ENCODE measurements at regions of chr17 and their contacts with region 1.

Region 1: GRCh38 chr17:63600569-63601438 is at the start of gene TACO1:
- DNase-seq: peak; percentile 81
- H3K4me3 Mint-ChIP-seq: peak within 1 kb of the TSS; percentile 97
- H3K27ac Mint-ChIP-seq: peak within 1 kb of the TSS; percentile 92
- H3K4me1 Mint-ChIP-seq: peaks cover 51% of the 10 kb centered on the region
- H3K27me3 Mint-ChIP-seq: no peaks in the 10 kb centered on the region
- total RNA-seq, gene TACO1: 26.7 to 27.9 TPM

Region 2: GRCh38 chr17:63445979-63446691 is 154.7 kb before region 1 on chr17 and contains the start of gene CYB561:
- CTCF ChIA-PET with region 1: no interaction called
- POLR2A ChIA-PET with region 1: interaction called, 11 read pairs
- DNase-seq: peak; percentile 74
- H3K4me3 Mint-ChIP-seq: peak within 1 kb of the TSS; percentile 64
- H3K27ac Mint-ChIP-seq: peak within 1 kb of the TSS; percentile 69
- H3K4me1 Mint-ChIP-seq: peaks cover 46% of the 10 kb centered on the region
- H3K27me3 Mint-ChIP-seq: peaks cover 3% of the 10 kb centered on the region
- total RNA-seq, gene CYB561: 28.9 to 30.3 TPM

Region 3: DNA sequence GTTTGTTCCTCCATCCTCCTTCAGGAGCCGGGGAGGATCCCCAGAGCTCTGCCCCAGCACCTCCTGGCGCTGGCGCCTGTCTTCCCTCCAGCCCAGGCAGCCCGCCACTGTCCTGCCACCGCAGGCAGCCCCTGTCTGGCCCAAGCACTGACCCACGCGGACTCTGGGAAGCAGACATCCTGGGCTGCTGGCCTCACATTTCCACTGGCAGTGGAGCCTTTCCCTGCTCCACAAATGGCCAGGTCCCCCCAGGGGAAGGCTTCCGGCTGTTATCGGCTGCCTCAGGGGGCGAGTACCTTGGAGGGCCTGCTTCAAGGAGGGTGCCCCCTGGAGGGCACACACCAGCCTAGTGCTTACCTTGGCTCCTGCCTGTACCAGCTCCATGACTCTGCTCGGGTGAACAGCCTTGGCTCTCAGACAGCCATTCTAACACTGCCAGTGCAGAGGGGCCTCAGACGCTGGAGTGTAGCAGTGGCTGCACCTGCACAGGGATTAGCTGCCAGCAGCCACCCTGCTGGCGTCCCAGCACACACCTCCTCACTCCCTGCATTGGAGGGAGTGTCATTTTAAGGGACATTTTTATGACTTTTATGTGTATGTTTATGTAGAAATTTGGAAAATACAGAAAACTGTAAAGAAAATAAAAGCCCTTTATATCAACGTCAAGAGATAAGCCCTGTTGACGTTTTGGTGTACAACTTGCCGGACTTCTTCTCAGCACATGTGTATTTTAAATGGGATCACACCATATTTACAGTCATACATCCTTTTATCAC is 102.9 kb before region 1 on chr17:
- CTCF ChIA-PET with region 1: no interaction called
- POLR2A ChIA-PET with region 1: no interaction called
- DNase-seq: no peak
- H3K4me3 Mint-ChIP-seq: no peak overlapping the region
- H3K27ac Mint-ChIP-seq: no peak overlapping the region
- H3K4me1 Mint-ChIP-seq: no peaks in the 10 kb centered on the region
- H3K27me3 Mint-ChIP-seq: peaks cover 7% of the 10 kb centered on the region

Region 4: GRCh38 chr17:63516910-63517824 is 83.6 kb before region 1 on chr17:
- CTCF ChIA-PET with region 1: no interaction called
- POLR2A ChIA-PET with region 1: no interaction called
- DNase-seq: no peak
- H3K4me3 Mint-ChIP-seq: no peak overlapping the region
- H3K27ac Mint-ChIP-seq: no peak overlapping the region
- H3K4me1 Mint-ChIP-seq: no peaks in the 10 kb centered on the region
- H3K27me3 Mint-ChIP-seq: peaks cover 12% of the 10 kb centered on the region

Region 5: DNA sequence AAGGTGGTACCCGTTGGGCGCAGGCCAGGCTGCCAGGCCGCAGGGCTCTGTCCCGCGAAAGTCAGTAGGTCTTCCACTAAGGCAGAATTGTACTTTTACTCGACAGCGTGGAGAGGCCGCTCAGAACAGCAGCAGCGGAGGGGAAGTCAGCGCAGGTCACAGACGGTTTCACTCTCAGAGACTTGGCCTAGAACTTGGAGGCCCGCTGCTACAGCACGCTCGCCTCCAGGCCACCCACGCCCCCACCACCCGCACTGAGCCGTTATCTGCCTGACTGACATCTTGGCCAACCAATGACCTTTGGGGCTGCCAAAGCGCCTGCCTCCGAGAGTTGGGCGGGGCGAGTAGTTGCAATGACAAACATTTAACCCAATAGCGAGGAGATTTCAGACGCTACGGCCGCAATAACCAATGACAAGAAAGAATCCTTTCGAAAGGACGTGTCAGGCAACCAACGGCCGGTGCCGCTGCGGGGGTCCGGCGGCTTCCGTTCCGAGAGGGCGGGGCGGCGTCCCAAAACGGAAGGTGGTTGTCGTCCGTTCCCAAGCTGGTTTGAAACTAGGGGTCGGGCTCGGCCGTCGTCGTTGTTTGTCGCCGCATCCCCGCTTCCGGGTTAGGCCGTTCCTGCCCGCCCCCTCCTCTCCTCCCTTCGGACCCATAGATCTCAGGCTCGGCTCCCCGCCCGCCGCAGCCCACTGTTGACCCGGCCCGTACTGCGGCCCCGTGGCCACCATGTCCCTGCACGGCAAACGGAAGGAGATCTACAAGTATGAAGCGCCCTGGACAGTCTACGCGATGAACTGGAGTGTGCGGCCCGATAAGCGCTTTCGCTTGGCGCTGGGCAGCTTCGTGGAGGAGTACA is 50.6 kb before region 1 on chr17 and contains the start of gene DCAF7:
- CTCF ChIA-PET with region 1: no interaction called
- POLR2A ChIA-PET with region 1: interaction called, 34 read pairs
- DNase-seq: peak; percentile 100
- H3K4me3 Mint-ChIP-seq: peak within 1 kb of the TSS; percentile 86
- H3K27ac Mint-ChIP-seq: peak within 1 kb of the TSS; percentile 96
- H3K4me1 Mint-ChIP-seq: peaks cover 32% of the 10 kb centered on the region
- H3K27me3 Mint-ChIP-seq: no peaks in the 10 kb centered on the region
- total RNA-seq, gene DCAF7: 138 to 139 TPM

Measured in activated CD4-positive, alpha-beta memory T cell treated with anti-CD3 and anti-CD28 coated beads, Interleukin-2, amount 10 ng/mL, durations not matched to agents 7 days and 5 days (primary cell).